Endothelial cell of umbilical vein (primary cell): ENCODE measurements at regions of chr19 and their contacts with region 1.

Region 1: DNA sequence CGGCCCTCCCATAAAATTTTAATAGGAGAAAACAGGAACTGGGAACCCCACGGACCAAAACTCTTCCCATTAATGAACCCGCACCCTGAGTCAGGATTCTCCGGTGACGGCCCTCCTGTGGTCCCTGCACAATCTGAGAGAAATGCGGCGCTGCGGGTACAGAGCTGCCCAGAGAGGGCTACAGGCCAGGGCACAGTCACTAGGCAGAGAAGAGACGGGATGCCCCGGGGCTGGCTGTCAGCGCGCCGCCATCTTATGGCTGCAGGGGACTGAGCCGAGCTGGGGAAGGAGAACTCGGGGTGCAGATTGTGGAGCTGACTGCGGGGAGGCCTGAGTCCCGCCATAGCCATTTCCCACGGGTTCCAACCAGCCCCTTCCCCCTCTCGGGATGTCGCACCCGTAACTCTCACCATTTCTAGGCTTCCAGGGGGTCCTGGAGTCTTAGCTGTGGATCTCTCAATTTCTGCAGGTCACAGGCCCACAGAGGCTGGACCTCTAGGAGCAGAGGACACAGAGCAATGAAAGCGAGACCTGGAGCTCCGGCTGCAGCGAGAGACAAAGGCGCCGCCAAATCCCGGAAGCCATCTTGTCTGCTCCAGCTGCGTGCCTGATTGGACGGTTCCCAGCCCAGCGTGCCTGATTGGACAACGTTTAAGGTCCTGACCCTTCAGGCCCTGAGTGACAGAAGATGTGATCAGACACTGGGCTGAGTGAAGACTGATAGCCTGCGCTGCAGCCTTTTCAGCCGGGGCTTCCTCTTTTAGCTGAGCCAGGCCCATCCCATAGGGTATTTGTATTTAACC is at the start of gene ZNF675:
- DNase-seq: peak; percentile 90
- H3K4me3 ChIP-seq: peak within 1 kb of the TSS; percentile 61 to 90 (median 86)
- H3K27ac ChIP-seq: peak within 1 kb of the TSS; percentile 81
- H3K4me1 ChIP-seq: peaks cover 5% of the 10 kb centered on the region
- H3K27me3 ChIP-seq: no peaks in the 10 kb centered on the region
- CTCF ChIP-seq: no peak
- POLR2A ChIP-seq: peak; percentile 61
- total RNA-seq, gene ZNF675: 7.6 and 9.3 TPM in 2 replicates

Region 2: DNA sequence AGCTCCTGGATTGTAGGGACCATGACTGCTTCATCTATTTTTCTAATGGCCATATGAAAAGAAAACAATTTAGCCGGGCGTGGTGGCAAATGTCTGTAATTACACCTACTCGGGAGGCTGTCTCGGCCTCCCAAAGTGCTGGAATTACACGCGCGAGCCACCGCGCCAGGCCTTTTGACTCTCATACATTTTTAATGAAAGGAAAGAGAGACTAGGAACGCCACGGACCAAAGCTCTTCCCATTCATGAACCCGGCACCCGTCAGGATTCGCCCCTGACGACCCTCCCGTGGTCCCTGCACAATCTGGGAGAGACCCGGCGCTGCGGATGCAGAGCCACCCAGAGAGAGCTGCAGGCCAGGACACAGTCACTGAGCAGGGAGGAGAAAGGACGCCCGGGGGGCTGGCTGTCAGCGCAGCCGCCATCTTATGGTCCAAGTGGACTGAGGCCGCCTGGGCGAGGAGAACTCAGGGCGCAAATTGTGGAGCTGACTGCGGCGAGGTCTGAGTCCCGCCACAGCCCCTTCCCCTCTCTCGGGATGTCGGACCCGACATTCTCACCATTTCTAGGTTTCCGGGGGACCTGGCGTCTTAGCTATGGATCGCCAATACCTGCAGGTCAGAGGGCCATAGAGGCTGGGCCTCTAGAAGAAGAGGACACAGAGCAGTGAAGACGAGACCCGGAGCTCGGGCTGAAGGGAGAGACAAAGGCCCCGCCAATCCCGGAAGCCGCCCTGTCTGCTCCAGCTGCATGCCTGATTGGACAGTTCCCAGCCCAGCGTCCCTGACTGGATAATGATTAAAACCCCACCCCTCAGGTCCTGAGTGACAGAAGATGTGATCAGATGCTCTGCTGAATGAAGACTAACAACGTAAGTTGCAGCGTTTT is 71.6 kb after region 1 on chr19 and contains the start of gene ZNF681:
- CTCF ChIA-PET with region 1: no interaction called
- POLR2A ChIA-PET with region 1: no interaction called
- dilution Hi-C with region 1: no loop called
- intact Hi-C with region 1: loop called (anchors 2 kb)
- DNase-seq: peak; percentile 18
- H3K4me3 ChIP-seq: peak within 1 kb of the TSS in 2 of 3 experiments; percentile 25 to 35
- H3K27ac ChIP-seq: peak within 1 kb of the TSS; percentile 12
- H3K4me1 ChIP-seq: no peaks in the 10 kb centered on the region
- H3K27me3 ChIP-seq: no peaks in the 10 kb centered on the region
- CTCF ChIP-seq: no peak
- POLR2A ChIP-seq: no peak
- total RNA-seq, gene ZNF681: 0.97 and 1.9 TPM in 2 replicates